Mammary epithelial cell (primary cell): ENCODE measurements at regions of chr17 and their contacts with region 1.

Region 1: GRCh38 chr17:59093702-59094231 is 12.9 kb downstream of the TRIM37 start:
- DNase-seq: peak; percentile 92
- H3K4me3 ChIP-seq: no peak overlapping the region
- H3K27ac ChIP-seq: peak overlapping the region; percentile 74
- H3K4me1 ChIP-seq: peaks cover 19% of the 10 kb centered on the region
- H3K27me3 ChIP-seq: no peaks in the 10 kb centered on the region
- CTCF ChIP-seq: no peak

Region 2: GRCh38 chr17:59165902-59166342 is 72.2 kb after region 1 on chr17:
- CTCF ChIA-PET with region 1: interaction called, 14 read pairs
- dilution Hi-C with region 1: no loop called
- in situ Hi-C with region 1: no loop called
- intact Hi-C with region 1: no loop called
- DNase-seq: peak; percentile 28
- H3K4me3 ChIP-seq: no peak overlapping the region
- H3K27ac ChIP-seq: no peak overlapping the region
- H3K4me1 ChIP-seq: peaks cover 13% of the 10 kb centered on the region
- H3K27me3 ChIP-seq: no peaks in the 10 kb centered on the region
- CTCF ChIP-seq: peak; percentile 78 to 79